ENCODE measurements at regions of chr11 and their contacts with region 1.

Region 1: GRCh38 chr11:14907411-14908213 is 15.6 kb upstream of the CYP2R1 start:
- DNase-seq: peak in 1 of 2 experiments; percentile 94
- H3K4me3 ChIP-seq: no peak overlapping the region
- H3K27ac ChIP-seq: no peak overlapping the region
- H3K4me1 ChIP-seq: peaks cover 0 to 11% (median under 1%) of the 10 kb centered on the region in 4 experiments; a peak in 4 of 7 replicates
- H3K27me3 ChIP-seq: peaks cover 0 to 7% (median 0%) of the 10 kb centered on the region in 4 experiments; a peak in 3 of 7 replicates
- CTCF ChIP-seq: peak; percentile 78 to 86 (median 80)
- EP300 ChIP-seq: no peak
- POLR2A ChIP-seq: no peak
- RAD21 ChIP-seq: peak; percentile 57 to 60

Region 2: DNA sequence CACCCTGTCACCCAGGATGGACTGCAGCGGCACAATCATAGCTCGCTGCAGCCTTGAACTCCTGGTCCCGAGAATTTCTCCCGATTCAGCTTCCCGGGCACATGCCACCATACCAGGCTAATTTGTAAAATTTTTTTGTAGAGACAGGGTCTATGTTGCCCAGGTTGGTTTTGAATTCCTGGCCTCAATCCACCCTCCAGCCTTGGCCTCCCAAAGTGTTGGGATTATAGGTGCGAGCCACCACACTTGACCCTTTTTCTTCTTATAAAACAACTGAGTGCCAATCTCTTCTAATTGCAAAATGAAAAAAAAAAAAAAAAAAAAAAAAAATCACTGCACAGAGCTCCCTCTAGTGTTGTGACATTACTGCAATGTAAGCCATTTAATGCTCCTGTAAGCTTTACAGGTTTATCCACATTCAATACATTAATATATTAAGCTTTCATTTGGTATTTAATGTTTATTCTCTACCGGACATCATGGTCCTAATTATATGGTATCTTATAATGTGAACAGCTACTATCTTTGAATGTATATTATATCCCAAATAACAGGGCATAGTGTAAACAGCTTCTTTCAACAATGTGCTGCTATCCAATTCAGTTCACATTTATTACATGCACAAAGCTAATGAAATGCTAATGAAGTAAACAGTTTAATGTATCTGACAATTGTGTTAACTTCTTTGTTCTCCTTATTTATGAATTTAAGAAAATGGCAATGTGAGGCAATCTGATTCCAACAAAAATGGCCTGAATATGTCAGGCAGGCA is 452.6 kb before region 1 on chr11:
- CTCF ChIA-PET with region 1: interaction called, 10 read pairs
- POLR2A ChIA-PET with region 1: no interaction called
- DNase-seq: peak in 1 of 2 experiments; percentile 52
- H3K4me3 ChIP-seq: no peak overlapping the region
- H3K27ac ChIP-seq: no peak overlapping the region
- H3K4me1 ChIP-seq: no peaks in the 10 kb centered on the region
- H3K27me3 ChIP-seq: no peaks in the 10 kb centered on the region
- CTCF ChIP-seq: peak in 2 of 3 experiments; percentile 35 to 42; a peak in 2 of 4 replicates
- EP300 ChIP-seq: no peak
- POLR2A ChIP-seq: no peak
- RAD21 ChIP-seq: peak; percentile 53 to 65

Region 3: GRCh38 chr11:14513800-14514199 is 393.8 kb before region 1 on chr11:
- CTCF ChIA-PET with region 1: no interaction called
- POLR2A ChIA-PET with region 1: no interaction called
- DNase-seq: no peak
- H3K4me3 ChIP-seq: no peak overlapping the region
- H3K27ac ChIP-seq: no peak overlapping the region
- H3K4me1 ChIP-seq: no peaks in the 10 kb centered on the region
- H3K27me3 ChIP-seq: no peaks in the 10 kb centered on the region
- CTCF ChIP-seq: no peak
- EP300 ChIP-seq: no peak
- POLR2A ChIP-seq: no peak
- RAD21 ChIP-seq: no peak

Region 4: GRCh38 chr11:14643697-14644225 is 263.9 kb before region 1 on chr11 and contains the start of gene PDE3B:
- CTCF ChIA-PET with region 1: interaction called, 7 read pairs
- POLR2A ChIA-PET with region 1: interaction called, 10 read pairs
- DNase-seq: no peak
- H3K4me3 ChIP-seq: peak within 1 kb of the TSS; percentile 74 to 89 (median 76)
- H3K27ac ChIP-seq: peak within 1 kb of the TSS; percentile 18; the same call in 1 of the 2 replicates
- H3K4me1 ChIP-seq: peaks cover 0 to 3% (median 0%) of the 10 kb centered on the region in 4 experiments; a peak in 2 of 7 replicates
- H3K27me3 ChIP-seq: peaks cover 2 to 30% (median 19%) of the 10 kb centered on the region in 4 experiments
- CTCF ChIP-seq: no peak; a peak in 1 of 4 replicates
- EP300 ChIP-seq: no peak
- POLR2A ChIP-seq: peak; percentile 82 to 89; a peak in 2 of 3 replicates
- RAD21 ChIP-seq: no peak; a peak in 1 of 4 replicates
- total RNA-seq, gene PDE3B: 9.9 and 10.9 TPM in 2 replicates

Region 5: GRCh38 chr11:14892036-14892567 is 15.5 kb before region 1 on chr11 and contains the start of gene CYP2R1:
- CTCF ChIA-PET with region 1: interaction called, 54 read pairs
- POLR2A ChIA-PET with region 1: interaction called, 5 read pairs
- DNase-seq: peak; percentile 89 to 92
- H3K4me3 ChIP-seq: peak within 1 kb of the TSS; percentile 51 to 71 (median 63)
- H3K27ac ChIP-seq: no peak within 1 kb of the TSS
- H3K4me1 ChIP-seq: no peaks in the 10 kb centered on the region; a peak in 2 of 7 replicates
- H3K27me3 ChIP-seq: peaks cover 0 to 4% (median 4%) of the 10 kb centered on the region in 4 experiments; a peak in 2 of 7 replicates
- CTCF ChIP-seq: no peak
- EP300 ChIP-seq: no peak
- POLR2A ChIP-seq: no peak
- RAD21 ChIP-seq: no peak
- total RNA-seq, gene CYP2R1: 12.9 and 13.8 TPM in 2 replicates

Region 6: GRCh38 chr11:14974515-14975251 is 67.1 kb after region 1 on chr11:
- CTCF ChIA-PET with region 1: interaction called, 61 read pairs
- POLR2A ChIA-PET with region 1: no interaction called
- DNase-seq: peak in 1 of 2 experiments; percentile 85
- H3K4me3 ChIP-seq: peak overlapping the region; percentile 34 to 55 (median 39); a peak in 7 of 8 replicates
- H3K27ac ChIP-seq: no peak overlapping the region
- H3K4me1 ChIP-seq: peaks cover 11 to 24% (median 15%) of the 10 kb centered on the region in 4 experiments
- H3K27me3 ChIP-seq: peaks cover 51 to 78% (median 63%) of the 10 kb centered on the region in 4 experiments
- CTCF ChIP-seq: peak; percentile 81 to 92 (median 82)
- EP300 ChIP-seq: no peak
- POLR2A ChIP-seq: no peak
- RAD21 ChIP-seq: peak; percentile 53 to 64

Region 7: GRCh38 chr11:15101072-15101709 is 193.6 kb after region 1 on chr11:
- CTCF ChIA-PET with region 1: interaction called, 30 read pairs
- POLR2A ChIA-PET with region 1: no interaction called
- DNase-seq: peak; percentile 21 to 83
- H3K4me3 ChIP-seq: no peak overlapping the region
- H3K27ac ChIP-seq: no peak overlapping the region
- H3K4me1 ChIP-seq: no peaks in the 10 kb centered on the region; a peak in 1 of 7 replicates
- H3K27me3 ChIP-seq: no peaks in the 10 kb centered on the region; a peak in 1 of 7 replicates
- CTCF ChIP-seq: peak; percentile 87 to 95 (median 94)
- EP300 ChIP-seq: no peak
- POLR2A ChIP-seq: no peak
- RAD21 ChIP-seq: peak; percentile 92 to 93

Measured in H1 (cell line).